MCF 10A (cell line): ENCODE measurements at regions of chr9 and their contacts with region 1.

Region 1: DNA sequence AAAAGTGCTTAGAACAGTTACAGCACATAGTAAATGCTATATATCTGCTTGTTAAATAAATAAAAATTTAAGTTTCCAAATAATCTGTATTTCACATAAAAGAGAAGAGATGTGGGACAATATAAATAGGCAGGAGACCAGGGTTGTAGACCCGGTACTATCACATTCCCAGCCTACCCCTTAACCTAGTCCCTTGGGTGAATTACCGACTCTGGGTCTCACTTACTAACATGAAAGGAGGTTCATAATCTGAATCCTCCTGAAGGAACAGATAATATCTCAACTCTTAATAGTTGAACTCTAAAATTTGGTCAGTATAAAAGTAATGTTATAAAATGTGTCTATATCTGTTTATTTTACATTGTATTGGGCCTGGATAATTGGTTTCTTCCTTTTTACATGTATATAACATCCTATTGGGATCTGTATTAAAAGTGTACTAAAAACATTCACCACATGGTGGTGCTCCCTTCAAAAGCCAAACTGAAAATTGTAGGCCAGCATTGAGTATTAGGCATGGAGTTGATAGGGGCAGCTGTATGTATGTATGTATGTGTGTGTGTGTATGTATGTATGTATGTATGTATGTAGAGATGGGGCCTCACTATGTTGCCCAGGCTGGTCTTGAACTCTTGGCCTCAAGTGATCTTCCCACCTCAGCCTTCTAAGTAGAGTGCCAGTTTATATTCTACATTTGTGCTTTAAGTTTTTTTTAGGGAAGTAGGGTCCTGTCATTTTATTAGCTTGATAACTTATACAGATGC is 64.2 kb upstream of the ABL1 start:
- DNase-seq: peak; percentile 76
- H3K4me3 Mint-ChIP-seq: no peak overlapping the region
- H3K27ac Mint-ChIP-seq: no peak overlapping the region
- H3K4me1 Mint-ChIP-seq: peaks cover 17% of the 10 kb centered on the region
- H3K27me3 Mint-ChIP-seq: no peaks in the 10 kb centered on the region
- CTCF ChIP-seq: peak; percentile 75

Region 2: DNA sequence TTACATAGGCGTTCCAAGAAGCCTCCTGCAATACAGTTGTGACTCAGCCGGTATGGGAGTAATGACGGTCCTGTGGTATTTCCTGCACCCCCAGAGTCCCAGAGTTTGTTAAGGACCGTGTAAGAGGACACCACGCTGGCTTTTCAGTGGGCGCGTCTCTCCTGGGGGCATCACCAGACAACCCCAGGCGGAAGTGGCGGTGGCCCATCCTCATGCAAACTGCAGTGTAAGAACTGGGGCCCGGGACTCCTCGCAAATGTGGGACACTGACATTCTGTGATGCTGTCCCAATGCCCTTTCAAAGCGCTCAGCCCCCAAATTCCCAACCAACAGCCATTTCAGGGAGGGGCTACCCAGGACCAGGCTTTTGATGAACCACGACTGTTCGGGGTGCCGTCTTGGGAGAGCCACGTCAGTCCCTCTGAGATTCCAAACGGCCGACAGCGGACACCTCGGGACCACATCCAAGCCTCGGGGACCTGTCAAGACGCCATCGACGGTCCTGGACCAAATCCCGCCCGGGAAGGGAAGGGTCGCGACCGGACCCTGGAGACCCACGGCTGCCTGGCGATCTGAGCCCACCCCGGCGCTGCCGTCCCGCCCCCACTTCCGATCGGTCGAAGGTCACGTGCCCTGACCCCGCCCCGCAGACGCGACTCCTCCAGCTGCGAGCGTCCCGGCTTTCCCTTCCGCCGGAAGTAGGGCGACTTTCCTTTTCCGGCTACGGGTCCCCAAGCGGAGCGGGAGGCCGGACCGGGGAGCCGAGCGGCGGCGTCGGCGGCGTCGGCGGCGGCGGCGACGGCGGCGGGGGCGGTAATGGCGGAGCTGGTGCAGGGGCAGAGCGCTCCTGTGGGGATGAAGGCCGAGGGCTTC is 191.8 kb before region 1 on chr9 and contains the start of gene FUBP3:
- CTCF ChIA-PET with region 1: no interaction called
- POLR2A ChIA-PET with region 1: no interaction called
- intact Hi-C with region 1: no loop called
- DNase-seq: peak; percentile 90
- H3K4me3 Mint-ChIP-seq: peak within 1 kb of the TSS; percentile 91
- H3K27ac Mint-ChIP-seq: peak within 1 kb of the TSS; percentile 91
- H3K4me1 Mint-ChIP-seq: peaks cover 22% of the 10 kb centered on the region
- H3K27me3 Mint-ChIP-seq: no peaks in the 10 kb centered on the region
- CTCF ChIP-seq: no peak
- total RNA-seq, gene FUBP3: 58.0 and 68.3 TPM in 2 replicates

Region 3: GRCh38 chr9:130701056-130702022 is 69.5 kb before region 1 on chr9:
- CTCF ChIA-PET with region 1: interaction called, 10 read pairs
- POLR2A ChIA-PET with region 1: no interaction called
- intact Hi-C with region 1: no loop called
- DNase-seq: peak; percentile 76
- H3K4me3 Mint-ChIP-seq: no peak overlapping the region
- H3K27ac Mint-ChIP-seq: no peak overlapping the region
- H3K4me1 Mint-ChIP-seq: peaks cover 19% of the 10 kb centered on the region
- H3K27me3 Mint-ChIP-seq: no peaks in the 10 kb centered on the region
- CTCF ChIP-seq: peak; percentile 79

Region 4: DNA sequence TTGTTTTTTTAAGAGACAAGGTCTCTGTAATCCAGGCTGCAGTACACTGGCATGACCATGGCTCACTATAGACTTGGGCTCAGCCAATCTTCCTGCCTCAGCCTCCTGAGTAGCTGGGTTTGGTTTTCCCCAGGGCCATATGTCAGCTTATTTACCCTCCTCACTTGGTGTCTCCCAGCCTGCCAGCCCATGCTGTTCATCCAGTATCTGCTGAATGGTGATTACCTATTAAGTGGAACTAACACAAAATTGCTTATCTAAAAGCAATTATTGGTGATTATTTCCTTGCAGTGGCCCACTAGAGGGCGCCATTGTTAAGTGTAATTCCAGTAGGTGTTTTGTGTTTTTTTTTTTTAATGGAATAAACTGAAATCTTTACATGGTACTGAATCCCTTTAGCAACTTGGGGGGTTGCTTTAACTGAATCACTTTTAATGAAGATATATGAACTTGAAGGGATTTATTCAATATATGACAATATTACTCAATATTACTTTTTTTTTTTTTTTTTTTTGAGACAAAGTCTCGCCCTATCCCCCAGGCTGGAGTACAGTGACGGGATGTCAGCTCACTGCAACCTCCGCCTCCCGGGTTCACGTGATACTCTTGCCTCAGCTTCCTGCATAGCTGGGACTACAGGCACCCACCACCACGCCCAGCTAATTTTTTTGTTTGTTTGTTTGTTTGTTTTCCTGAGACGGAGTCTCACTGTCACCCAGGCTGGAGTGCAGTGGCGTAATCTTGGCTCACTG is 63.5 kb before region 1 on chr9:
- CTCF ChIA-PET with region 1: interaction called, 6 read pairs
- POLR2A ChIA-PET with region 1: no interaction called
- intact Hi-C with region 1: loop called (anchors 1 kb)
- DNase-seq: peak; percentile 80
- H3K4me3 Mint-ChIP-seq: no peak overlapping the region
- H3K27ac Mint-ChIP-seq: no peak overlapping the region
- H3K4me1 Mint-ChIP-seq: no peaks in the 10 kb centered on the region
- H3K27me3 Mint-ChIP-seq: no peaks in the 10 kb centered on the region
- CTCF ChIP-seq: peak; percentile 79

Region 5: DNA sequence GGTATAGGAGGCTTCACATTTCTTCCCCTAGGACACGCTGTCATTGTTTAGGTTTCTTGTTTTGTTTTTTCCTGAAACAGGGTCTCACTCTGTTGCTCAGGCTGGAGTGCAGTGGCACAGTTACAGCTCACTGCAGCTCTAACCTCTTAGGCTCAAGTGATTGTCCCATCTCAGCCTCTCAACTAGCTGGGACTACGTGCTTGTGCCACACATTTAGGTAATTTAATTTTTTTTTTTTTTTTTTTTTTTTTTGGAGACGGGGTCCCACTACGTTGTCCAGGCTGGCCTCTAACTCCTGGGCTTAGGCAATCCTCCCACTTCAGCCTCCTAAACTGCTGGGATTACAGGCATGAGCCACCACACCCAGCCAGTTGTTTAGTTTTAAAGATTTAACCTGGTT is 11.1 kb before region 1 on chr9:
- CTCF ChIA-PET with region 1: interaction called, 10 read pairs
- POLR2A ChIA-PET with region 1: interaction called, 3 read pairs
- intact Hi-C with region 1: no loop called
- DNase-seq: no peak
- H3K4me3 Mint-ChIP-seq: no peak overlapping the region
- H3K27ac Mint-ChIP-seq: no peak overlapping the region
- H3K4me1 Mint-ChIP-seq: no peaks in the 10 kb centered on the region
- H3K27me3 Mint-ChIP-seq: no peaks in the 10 kb centered on the region
- CTCF ChIP-seq: no peak

Region 6: GRCh38 chr9:130834371-130835311 is 63.8 kb after region 1 on chr9 and contains the start of gene ABL1:
- CTCF ChIA-PET with region 1: interaction called, 6 read pairs
- POLR2A ChIA-PET with region 1: interaction called, 4 read pairs
- intact Hi-C with region 1: loop called (anchors 2 kb)
- DNase-seq: peak; percentile 89
- H3K4me3 Mint-ChIP-seq: peak within 1 kb of the TSS; percentile 90
- H3K27ac Mint-ChIP-seq: peak within 1 kb of the TSS; percentile 99
- H3K4me1 Mint-ChIP-seq: peaks cover 47% of the 10 kb centered on the region
- H3K27me3 Mint-ChIP-seq: no peaks in the 10 kb centered on the region
- CTCF ChIP-seq: no peak
- total RNA-seq, gene ABL1: 67.5 TPM in 2 replicates

Region 7: GRCh38 chr9:130940693-130941576 is 170.1 kb after region 1 on chr9:
- CTCF ChIA-PET with region 1: no interaction called
- POLR2A ChIA-PET with region 1: no interaction called
- intact Hi-C with region 1: loop called (anchors 2 kb)
- DNase-seq: peak; percentile 87
- H3K4me3 Mint-ChIP-seq: no peak overlapping the region
- H3K27ac Mint-ChIP-seq: no peak overlapping the region
- H3K4me1 Mint-ChIP-seq: peaks cover 24% of the 10 kb centered on the region
- H3K27me3 Mint-ChIP-seq: peaks cover 11% of the 10 kb centered on the region
- CTCF ChIP-seq: peak; percentile 81

Region 8: GRCh38 chr9:130997925-130998596 is 227.2 kb after region 1 on chr9:
- CTCF ChIA-PET with region 1: no interaction called
- POLR2A ChIA-PET with region 1: no interaction called
- intact Hi-C with region 1: loop called (anchors 5 kb)
- DNase-seq: peak; percentile 73
- H3K4me3 Mint-ChIP-seq: no peak overlapping the region
- H3K27ac Mint-ChIP-seq: no peak overlapping the region
- H3K4me1 Mint-ChIP-seq: peaks cover 18% of the 10 kb centered on the region
- H3K27me3 Mint-ChIP-seq: peaks cover 17% of the 10 kb centered on the region
- CTCF ChIP-seq: peak; percentile 89